PC-9 (cell line): ENCODE measurements at regions of chr22 and their contacts with region 1.

Region 1: DNA sequence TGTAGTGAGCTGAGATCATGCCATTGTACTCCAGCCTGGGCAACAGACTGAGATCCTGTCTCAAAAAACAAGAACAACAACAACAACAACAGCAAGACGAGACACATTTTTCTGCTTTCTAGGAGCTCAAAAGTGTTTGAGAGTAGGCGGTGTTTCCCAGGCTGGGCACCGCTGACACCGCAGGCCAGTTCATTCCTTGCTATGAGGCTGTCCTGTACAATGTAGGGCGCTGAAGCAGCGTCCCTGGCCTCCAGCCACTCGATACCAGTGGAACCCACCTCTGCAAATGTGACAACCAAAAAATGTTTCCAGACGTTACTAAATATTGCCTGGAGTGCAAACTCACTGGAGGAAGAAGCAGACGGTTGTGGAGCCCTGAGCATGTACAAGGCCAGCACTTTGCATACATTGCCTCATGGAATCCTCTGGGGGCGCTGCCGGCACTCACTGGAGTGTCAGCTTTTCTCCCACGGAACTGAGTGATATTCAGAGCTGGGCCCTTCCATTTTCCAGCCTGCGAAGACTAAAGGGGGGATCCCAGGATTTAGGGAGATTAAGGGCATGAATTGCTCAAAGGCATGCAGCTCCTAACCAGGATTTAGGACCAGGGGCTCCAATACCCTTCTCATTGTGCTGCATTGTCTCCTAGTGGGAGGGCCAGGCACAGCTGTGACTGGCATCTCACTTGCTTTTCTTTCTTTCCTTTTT is 5.8 kb upstream of the MIEF1 start:
- DNase-seq: peak; percentile 39 to 59
- H3K4me3 ChIP-seq: no peak overlapping the region
- H3K27ac ChIP-seq: no peak overlapping the region
- H3K4me1 ChIP-seq: peaks cover 9% of the 10 kb centered on the region
- H3K27me3 ChIP-seq: no peaks in the 10 kb centered on the region
- CTCF ChIP-seq: peak; percentile 87

Region 2: GRCh38 chr22:38755911-38756532 is 740.3 kb before region 1 on chr22 and contains the start of gene SUN2:
- CTCF ChIA-PET with region 1: no interaction called
- POLR2A ChIA-PET with region 1: no interaction called
- intact Hi-C with region 1: no loop called
- DNase-seq: peak; percentile 71 to 90
- H3K4me3 ChIP-seq: peak within 1 kb of the TSS; percentile 89
- H3K27ac ChIP-seq: peak within 1 kb of the TSS; percentile 87
- H3K4me1 ChIP-seq: peaks cover 55% of the 10 kb centered on the region
- H3K27me3 ChIP-seq: no peaks in the 10 kb centered on the region
- CTCF ChIP-seq: no peak
- total RNA-seq, gene SUN2: 169 and 220 TPM in 2 replicates

Region 3: GRCh38 chr22:39379756-39380730 is 116.2 kb before region 1 on chr22:
- CTCF ChIA-PET with region 1: interaction called, 19 read pairs
- POLR2A ChIA-PET with region 1: no interaction called
- intact Hi-C with region 1: no loop called
- DNase-seq: peak in 1 of 2 experiments; percentile 67
- H3K4me3 ChIP-seq: no peak overlapping the region
- H3K27ac ChIP-seq: no peak overlapping the region
- H3K4me1 ChIP-seq: no peaks in the 10 kb centered on the region; the same call in 1 of the 2 replicates
- H3K27me3 ChIP-seq: no peaks in the 10 kb centered on the region
- CTCF ChIP-seq: no peak

Region 4: GRCh38 chr22:39405346-39406085 is 90.8 kb before region 1 on chr22:
- CTCF ChIA-PET with region 1: no interaction called
- POLR2A ChIA-PET with region 1: no interaction called
- intact Hi-C with region 1: no loop called
- DNase-seq: no peak
- H3K4me3 ChIP-seq: no peak overlapping the region
- H3K27ac ChIP-seq: no peak overlapping the region
- H3K4me1 ChIP-seq: peaks cover 2% of the 10 kb centered on the region
- H3K27me3 ChIP-seq: no peaks in the 10 kb centered on the region
- CTCF ChIP-seq: no peak